A673 (cell line): ENCODE measurements at regions of chr11 and their contacts with region 1.

Region 1: DNA sequence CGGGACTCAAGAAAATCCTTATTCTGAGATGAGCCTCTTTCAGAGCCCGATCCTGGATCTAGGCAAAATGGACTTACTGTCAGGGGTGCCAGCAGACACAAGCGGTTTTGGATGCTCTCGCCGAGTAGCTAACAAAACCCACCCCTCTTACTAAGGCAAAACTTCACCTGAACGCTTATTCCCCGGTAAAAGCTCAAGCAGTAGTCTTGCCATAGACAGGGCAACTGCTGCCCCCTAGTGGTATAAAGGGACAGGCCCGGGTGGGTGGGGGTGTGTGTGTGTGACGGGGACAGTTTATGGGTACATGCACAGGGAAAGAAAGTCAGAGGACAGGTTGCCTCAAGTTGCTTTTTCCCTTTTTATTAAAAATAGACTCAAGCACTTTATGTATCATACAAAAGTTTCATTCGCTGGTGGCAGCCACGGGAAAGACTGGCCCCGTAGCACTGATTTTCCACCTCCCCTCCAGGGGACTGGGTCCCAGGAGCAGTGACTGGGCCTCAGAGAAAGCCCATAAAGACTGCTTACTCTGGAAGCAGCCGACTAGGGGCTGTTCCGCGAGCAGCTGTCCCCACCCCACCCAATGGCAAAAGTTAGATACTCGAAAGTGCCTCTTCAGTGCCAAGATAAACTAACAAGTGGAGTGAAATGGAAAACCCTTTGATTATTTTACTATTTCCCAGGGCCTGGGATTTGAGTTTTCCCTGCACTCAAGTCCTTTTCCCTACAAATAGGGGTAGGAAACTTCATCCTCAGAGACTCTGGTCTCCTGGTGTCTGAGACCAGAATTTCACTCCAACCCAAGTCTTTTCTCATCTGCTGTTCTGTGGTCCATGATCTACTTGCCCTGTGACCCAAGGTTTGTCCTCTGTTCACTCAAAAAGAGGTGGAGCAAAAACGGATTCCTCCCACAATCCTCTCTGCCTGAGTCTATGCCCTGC is 4.7 kb downstream of the YPEL4 start:
- DNase-seq: peak; percentile 89
- H3K4me3 ChIP-seq: no peak overlapping the region
- H3K27ac ChIP-seq: no peak overlapping the region
- H3K4me1 ChIP-seq: peaks cover 64% of the 10 kb centered on the region
- H3K27me3 ChIP-seq: peaks cover 19% of the 10 kb centered on the region
- CTCF ChIP-seq: peak; percentile 99

Region 2: GRCh38 chr11:57456960-57457642 is 187.9 kb before region 1 on chr11:
- CTCF ChIA-PET with region 1: interaction called, 10 read pairs
- POLR2A ChIA-PET with region 1: no interaction called
- intact Hi-C with region 1: loop called (anchors 1 kb)
- DNase-seq: peak; percentile 86
- H3K4me3 ChIP-seq: no peak overlapping the region
- H3K27ac ChIP-seq: no peak overlapping the region
- H3K4me1 ChIP-seq: peaks cover 27% of the 10 kb centered on the region
- H3K27me3 ChIP-seq: peaks cover 30% of the 10 kb centered on the region
- CTCF ChIP-seq: peak; percentile 99

Region 3: DNA sequence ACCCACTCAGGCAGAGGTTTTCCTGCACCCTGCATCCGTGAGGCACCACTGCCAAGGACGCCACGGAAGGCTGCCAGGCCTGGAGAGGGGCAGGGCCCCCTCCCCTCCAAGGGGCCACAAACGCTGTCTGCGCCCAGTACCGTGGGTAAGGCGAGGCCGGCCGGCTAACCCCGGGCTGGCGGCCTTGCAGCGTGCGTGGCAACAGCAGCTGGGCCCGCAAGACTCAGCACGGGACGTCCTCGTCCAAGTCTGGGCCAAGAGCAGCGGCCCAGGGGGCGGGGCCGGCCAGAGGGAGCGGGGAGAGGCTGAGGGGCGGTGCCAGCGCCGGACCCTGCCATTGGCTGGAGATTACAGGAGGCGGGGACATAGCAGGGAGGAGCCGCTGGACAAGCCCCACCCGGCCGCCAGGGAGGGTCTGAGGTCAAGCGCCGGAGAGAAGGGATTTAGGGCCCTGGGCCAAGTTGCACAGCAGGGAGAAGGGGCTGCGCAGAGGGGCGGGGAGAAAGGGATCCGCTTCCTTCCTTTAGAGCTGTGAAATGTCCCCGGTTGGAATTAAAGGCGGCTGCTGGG is 145.5 kb before region 1 on chr11:
- CTCF ChIA-PET with region 1: interaction called, 3 read pairs
- POLR2A ChIA-PET with region 1: no interaction called
- intact Hi-C with region 1: loop called (anchors 10 kb)
- DNase-seq: peak; percentile 92
- H3K4me3 ChIP-seq: peak overlapping the region; percentile 22
- H3K27ac ChIP-seq: peak overlapping the region; percentile 3
- H3K4me1 ChIP-seq: peaks cover 16% of the 10 kb centered on the region
- H3K27me3 ChIP-seq: no peaks in the 10 kb centered on the region
- CTCF ChIP-seq: no peak

Region 4: GRCh38 chr11:57657194-57658022 is 12.4 kb after region 1 on chr11 and contains the start of gene CLP1:
- CTCF ChIA-PET with region 1: interaction called, 5 read pairs
- POLR2A ChIA-PET with region 1: interaction called, 13 read pairs
- intact Hi-C with region 1: no loop called
- DNase-seq: peak; percentile 100
- H3K4me3 ChIP-seq: peak within 1 kb of the TSS; percentile 63
- H3K27ac ChIP-seq: peak within 1 kb of the TSS; percentile 62
- H3K4me1 ChIP-seq: no peaks in the 10 kb centered on the region
- H3K27me3 ChIP-seq: no peaks in the 10 kb centered on the region
- CTCF ChIP-seq: no peak
- total RNA-seq, gene CLP1: 23.4 and 26.8 TPM in 2 replicates

Region 5: DNA sequence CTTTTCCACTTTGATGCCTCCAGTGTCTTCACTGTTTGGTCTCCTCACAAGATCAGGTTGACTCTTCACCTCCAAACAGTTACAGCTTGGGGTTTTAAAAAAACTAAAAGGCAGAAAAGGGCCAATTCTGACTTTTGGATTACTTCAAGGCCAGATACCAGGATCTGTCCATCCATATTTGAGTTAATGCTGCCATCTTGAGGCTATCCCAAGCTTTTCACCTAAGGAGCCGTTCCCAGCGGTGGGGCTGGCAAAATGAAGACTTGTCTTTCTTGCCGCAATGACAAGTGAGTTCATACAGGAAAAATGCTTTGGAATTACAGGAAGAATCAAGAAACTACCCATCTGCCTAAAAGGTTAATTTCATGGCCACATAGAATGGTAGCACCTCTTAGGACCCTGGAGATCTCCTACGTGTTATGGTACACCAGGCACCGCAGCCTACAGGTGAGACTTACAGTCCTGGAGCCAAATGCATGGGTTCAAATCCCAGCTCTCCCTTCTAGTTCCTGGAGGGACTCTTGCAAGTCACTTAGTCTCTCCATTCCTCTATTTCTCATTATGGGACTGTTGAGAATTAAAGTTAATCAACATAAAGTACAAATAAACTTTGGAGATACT is 868.8 kb after region 1 on chr11:
- CTCF ChIA-PET with region 1: no interaction called
- POLR2A ChIA-PET with region 1: no interaction called
- intact Hi-C with region 1: loop called (anchors 10 kb)
- DNase-seq: peak; percentile 78
- H3K4me3 ChIP-seq: no peak overlapping the region
- H3K27ac ChIP-seq: no peak overlapping the region
- H3K4me1 ChIP-seq: no peaks in the 10 kb centered on the region
- H3K27me3 ChIP-seq: peaks cover 6% of the 10 kb centered on the region
- CTCF ChIP-seq: peak; percentile 80